ENCODE measurements at regions of chr10 and their contacts with region 1.

Region 1: DNA sequence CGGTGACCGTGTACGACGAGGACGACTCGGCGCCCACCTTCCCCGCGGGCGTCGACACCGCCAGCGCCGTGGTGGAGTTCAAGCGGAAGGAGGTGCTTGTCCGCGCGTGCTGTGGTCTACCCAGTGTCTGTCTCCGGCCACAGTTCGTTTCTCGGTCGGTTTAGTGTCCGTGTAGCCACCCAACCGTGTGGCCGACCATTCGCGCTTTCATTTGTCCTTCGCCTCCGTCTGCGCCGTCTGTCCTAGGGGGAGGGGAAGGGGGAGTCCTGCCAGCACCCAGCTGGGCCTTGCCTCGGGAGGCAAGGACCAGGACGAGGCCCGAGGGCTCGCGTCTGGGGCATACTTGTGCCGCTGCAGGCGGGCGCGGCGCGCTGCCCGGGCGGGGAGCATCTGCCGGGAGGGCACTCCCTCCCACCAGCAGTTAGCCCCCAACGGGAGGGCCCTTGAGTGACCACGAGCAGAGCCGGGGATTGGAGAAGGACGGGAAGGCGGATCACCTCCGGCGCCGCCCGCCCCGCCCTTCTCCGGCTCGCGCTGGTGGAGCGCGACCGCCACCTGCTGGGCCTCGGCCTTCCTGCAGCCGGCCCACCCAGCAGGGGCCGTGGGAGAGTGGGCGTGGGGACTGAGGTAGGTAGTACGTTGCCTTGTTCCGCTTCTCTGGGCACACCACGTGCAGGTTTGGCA is 28.4 kb downstream of the RET start:
- DNase-seq: peak; percentile 31 to 56
- ATAC-seq: peak; percentile 89 to 93
- H3K4me3 ChIP-seq: peak overlapping the region; percentile 60 to 79 (median 68)
- H3K27ac ChIP-seq: no peak overlapping the region
- H3K4me1 ChIP-seq: peaks cover 0 to 7% of the 10 kb centered on the region in 2 donors
- H3K27me3 ChIP-seq: no peaks in the 10 kb centered on the region
- CTCF ChIP-seq: peak; percentile 96 to 100 (median 98)
- POLR2A ChIP-seq: no peak

Region 2: GRCh38 chr10:42753126-42753506 is 352.1 kb before region 1 on chr10:
- in situ Hi-C with region 1: loop called in 1 of 4 experiments (anchors 25 kb)
- intact Hi-C with region 1: loop called (anchors 1 kb)
- DNase-seq: peak; percentile 26 to 42
- ATAC-seq: peak; percentile 90 to 92
- H3K4me3 ChIP-seq: peak overlapping the region; percentile 56 to 74 (median 61)
- H3K27ac ChIP-seq: peak overlapping the region in 1 of 4 donors; percentile 18
- H3K4me1 ChIP-seq: peaks cover 7 to 24% of the 10 kb centered on the region in 2 donors
- H3K27me3 ChIP-seq: peaks cover 26 to 58% (median 50%) of the 10 kb centered on the region in 3 donors
- CTCF ChIP-seq: peak; percentile 56 to 78 (median 72)
- POLR2A ChIP-seq: no peak

Region 3: DNA sequence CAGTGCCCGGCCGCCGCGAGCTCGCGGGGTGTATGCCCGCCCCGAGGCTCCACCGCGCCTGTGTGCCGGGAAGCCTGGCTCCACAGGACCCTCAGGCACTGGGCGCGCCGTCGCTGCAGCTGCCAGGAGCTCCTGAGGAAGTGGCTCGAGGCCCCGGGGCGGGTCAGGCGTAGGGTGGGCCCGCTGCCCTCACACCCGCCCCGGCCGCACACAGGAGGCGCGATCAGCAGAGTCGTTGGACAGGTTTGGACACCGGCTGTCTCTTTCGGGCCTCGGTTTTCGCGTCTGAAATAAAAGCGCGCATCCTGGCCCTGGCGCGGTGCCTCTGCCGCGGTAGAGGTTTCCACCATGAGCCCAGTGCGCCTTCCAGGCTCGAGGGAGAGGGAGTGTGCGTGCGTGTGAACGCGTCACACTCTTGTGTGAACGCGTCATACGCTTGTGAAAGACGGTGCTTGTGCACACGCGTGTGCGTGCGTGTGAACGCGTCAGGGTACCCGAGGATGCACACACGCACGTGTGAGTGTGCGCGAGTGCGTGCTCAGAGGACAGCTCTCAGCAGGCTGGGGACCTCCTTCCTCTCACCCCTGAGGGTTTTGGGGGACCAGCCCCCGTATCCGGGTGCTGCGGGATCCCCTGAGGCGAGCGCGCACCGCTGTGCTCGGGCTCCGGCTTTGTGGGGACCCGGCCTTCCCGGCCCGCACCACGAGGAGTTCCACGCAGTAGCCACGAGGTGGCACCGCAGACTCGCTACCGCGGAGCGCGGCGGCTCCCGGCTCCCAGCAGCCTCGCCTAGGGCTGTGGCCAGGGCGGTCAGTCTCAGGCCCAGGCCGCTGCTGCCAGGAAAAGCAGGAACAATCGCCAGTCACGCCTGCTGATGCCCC is 238.9 kb before region 1 on chr10:
- in situ Hi-C with region 1: loop called in 2 of 4 experiments (anchors 10 to 25 kb)
- intact Hi-C with region 1: loop called (anchors 1 kb)
- DNase-seq: peak; percentile 53 to 61
- ATAC-seq: peak; percentile 79 to 95
- H3K4me3 ChIP-seq: peak overlapping the region; percentile 21 to 39 (median 29)
- H3K27ac ChIP-seq: no peak overlapping the region
- H3K4me1 ChIP-seq: peaks cover 4 to 7% of the 10 kb centered on the region in 2 donors
- H3K27me3 ChIP-seq: peaks cover 1 to 10% (median 10%) of the 10 kb centered on the region in 3 donors
- CTCF ChIP-seq: peak; percentile 46 to 83 (median 72)
- POLR2A ChIP-seq: no peak

Region 4: GRCh38 chr10:42875792-42876460 is 229.3 kb before region 1 on chr10:
- in situ Hi-C with region 1: loop called in 2 of 4 experiments (anchors 10 to 25 kb)
- intact Hi-C with region 1: no loop called
- DNase-seq: no peak
- ATAC-seq: no peak
- H3K4me3 ChIP-seq: no peak overlapping the region
- H3K27ac ChIP-seq: no peak overlapping the region
- H3K4me1 ChIP-seq: peaks cover 0 to 4% of the 10 kb centered on the region in 2 donors
- H3K27me3 ChIP-seq: no peaks in the 10 kb centered on the region
- CTCF ChIP-seq: no peak
- POLR2A ChIP-seq: no peak